ENCODE measurements at regions of chr5 and their contacts with region 1.

Region 1: DNA sequence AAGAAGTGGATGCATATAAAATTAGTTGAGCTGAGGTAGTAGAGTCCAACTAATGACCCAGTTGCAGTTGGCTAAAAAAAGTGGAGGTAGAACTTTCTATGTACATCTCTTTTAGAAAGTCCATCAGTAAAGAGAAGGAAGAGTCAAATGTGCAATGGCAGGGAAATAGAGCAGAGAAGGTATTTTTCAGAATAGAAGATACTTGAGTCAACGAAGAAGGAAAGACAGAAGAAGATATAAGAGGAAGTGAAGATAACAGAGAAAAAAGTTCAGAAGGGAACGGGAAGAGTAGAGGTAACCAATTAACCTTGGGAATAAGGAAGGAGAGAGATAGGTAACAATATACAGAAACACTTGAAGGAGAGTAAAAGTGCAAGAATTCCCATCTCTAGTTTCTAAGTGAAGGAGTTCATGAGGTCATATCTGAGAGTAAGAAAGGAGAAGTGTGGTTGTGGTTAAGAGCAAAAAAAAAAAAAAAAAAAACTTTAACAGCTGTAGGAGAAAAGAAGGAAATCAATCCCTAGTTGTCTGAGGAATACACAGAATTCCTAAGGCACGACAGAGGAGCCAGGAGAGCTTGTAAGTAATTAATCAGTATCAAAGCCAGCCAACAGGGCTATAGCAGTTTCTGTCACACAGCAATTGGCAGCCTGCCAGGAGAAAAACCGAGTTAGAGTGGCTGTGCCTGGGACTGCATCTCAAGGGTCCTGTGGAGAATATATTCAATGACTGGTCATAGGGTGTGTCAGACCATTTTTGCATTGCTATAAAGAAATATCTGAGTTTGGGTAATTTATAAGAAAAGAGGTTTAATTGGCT is 61.0 kb downstream of the ARL15 start:
- DNase-seq: peak; percentile 18
- CTCF ChIP-seq: no peak

Region 2: GRCh38 chr5:53956196-53956595 is 293.2 kb before region 1 on chr5:
- in situ Hi-C with region 1: no loop called
- DNase-seq: no peak
- CTCF ChIP-seq: no peak

Region 3: GRCh38 chr5:54148067-54148466 is 101.4 kb before region 1 on chr5:
- in situ Hi-C with region 1: no loop called
- DNase-seq: no peak
- CTCF ChIP-seq: no peak

Region 4: DNA sequence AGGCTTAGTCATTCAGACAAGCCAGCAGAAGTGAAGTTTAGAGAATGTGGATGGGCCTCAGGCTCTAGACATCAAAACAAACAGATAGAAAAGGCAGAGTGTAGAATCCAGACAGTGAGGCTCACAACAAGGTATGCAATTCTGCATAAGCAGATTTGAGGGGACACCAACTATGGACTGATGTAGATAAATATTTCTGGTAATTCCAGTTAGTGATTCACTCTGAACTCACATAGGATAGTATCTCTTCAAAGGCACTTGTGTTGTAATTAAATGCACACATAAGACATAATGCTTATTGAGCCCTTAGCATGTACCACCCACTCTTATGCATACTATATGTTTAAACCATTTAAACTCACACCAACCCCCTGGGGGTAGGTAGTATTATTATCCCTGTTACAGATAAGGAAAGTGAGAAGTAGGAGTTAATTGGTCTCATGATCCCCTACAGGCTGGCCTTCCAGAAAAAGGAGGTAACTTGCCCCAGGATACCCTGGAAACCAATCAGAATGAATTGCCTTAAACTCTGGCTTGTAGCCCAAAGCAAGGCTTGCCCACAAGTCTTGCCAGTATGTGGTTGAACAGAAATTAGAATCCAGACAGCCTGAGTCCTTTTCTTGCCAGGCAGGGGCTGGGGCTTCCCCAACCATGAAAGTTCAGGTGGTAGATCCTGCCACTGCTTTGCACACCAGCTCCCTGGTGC is 166.6 kb after region 1 on chr5:
- in situ Hi-C with region 1: loop called (anchors 10 kb)
- DNase-seq: no peak
- CTCF ChIP-seq: no peak

Region 5: GRCh38 chr5:54480296-54480695 is 230.9 kb after region 1 on chr5:
- in situ Hi-C with region 1: loop called (anchors 25 kb)
- DNase-seq: no peak
- CTCF ChIP-seq: no peak